ENCODE measurements at regions of chr4 and their contacts with region 1.

Region 1: GRCh38 chr4:109648266-109648996 is 54.8 kb downstream of the CASP6 start:
- DNase-seq: peak in 17 of 35 experiments; percentile 7 to 82 (median 30)
- ATAC-seq: peak; percentile 86 to 94 (median 88)
- H3K4me3 ChIP-seq: no peak overlapping the region
- H3K4me3 Mint-ChIP-seq: peak overlapping the region in 2 of 3 donors; percentile 68
- H3K27ac ChIP-seq: peak overlapping the region; percentile 82
- H3K27ac Mint-ChIP-seq: peak overlapping the region; percentile 91 to 94
- H3K4me1 ChIP-seq: peaks cover 32 to 49% of the 10 kb centered on the region in 2 experiments
- H3K4me1 Mint-ChIP-seq: peaks cover 35 to 47% (median 44%) of the 10 kb centered on the region in 3 donors
- H3K27me3 ChIP-seq: no peaks in the 10 kb centered on the region
- H3K27me3 Mint-ChIP-seq: no peaks in the 10 kb centered on the region

Region 2: DNA sequence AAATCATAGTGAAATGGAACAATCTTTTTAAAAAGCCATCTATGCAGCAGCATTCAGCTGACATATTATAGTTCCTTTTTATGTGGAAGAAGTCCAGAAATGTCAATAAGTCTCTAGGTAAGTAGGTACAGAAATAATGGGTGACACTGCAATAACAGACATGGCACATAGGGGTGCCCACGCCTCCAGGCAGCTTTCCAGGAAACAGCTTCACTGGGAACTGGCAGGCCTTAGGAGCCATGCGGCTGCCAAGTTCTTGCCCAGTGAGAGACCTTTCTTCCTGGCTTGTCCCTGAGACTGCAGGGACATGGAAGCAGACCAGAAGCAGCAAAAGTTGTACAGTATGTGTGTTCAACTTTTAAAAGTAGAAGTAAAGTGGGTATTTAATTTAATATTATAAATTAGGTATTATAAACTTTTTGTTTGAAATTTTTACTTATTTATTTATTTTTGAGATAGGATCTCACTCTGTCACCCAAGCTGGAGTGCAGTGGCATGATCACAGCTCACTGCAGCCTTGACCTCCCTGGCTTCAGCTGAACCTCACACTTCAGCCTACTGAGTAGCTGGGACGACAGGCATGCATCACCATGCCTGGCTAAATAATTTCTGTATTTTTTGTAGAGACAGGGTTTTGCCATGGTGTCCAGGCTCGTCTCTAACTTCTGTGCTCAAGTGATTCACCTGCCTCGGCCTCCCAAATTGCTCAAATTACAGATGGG is 873.5 kb before region 1 on chr4:
- CTCF ChIA-PET with region 1: no interaction called
- POLR2A ChIA-PET with region 1: no interaction called
- DNase-seq: no peak
- ATAC-seq: no peak
- H3K4me3 ChIP-seq: no peak overlapping the region
- H3K4me3 Mint-ChIP-seq: no peak overlapping the region
- H3K27ac ChIP-seq: no peak overlapping the region
- H3K27ac Mint-ChIP-seq: no peak overlapping the region
- H3K4me1 ChIP-seq: no peaks in the 10 kb centered on the region
- H3K4me1 Mint-ChIP-seq: no peaks in the 10 kb centered on the region
- H3K27me3 ChIP-seq: peaks cover 0 to 13% of the 10 kb centered on the region in 2 experiments
- H3K27me3 Mint-ChIP-seq: peaks cover 9 to 20% of the 10 kb centered on the region in 2 donors

Region 3: GRCh38 chr4:109511414-109511813 is 137.0 kb before region 1 on chr4:
- CTCF ChIA-PET with region 1: no interaction called
- POLR2A ChIA-PET with region 1: no interaction called
- DNase-seq: no peak
- ATAC-seq: no peak
- H3K4me3 ChIP-seq: no peak overlapping the region
- H3K4me3 Mint-ChIP-seq: no peak overlapping the region
- H3K27ac ChIP-seq: no peak overlapping the region
- H3K27ac Mint-ChIP-seq: no peak overlapping the region
- H3K4me1 ChIP-seq: no peaks in the 10 kb centered on the region
- H3K4me1 Mint-ChIP-seq: no peaks in the 10 kb centered on the region
- H3K27me3 ChIP-seq: no peaks in the 10 kb centered on the region
- H3K27me3 Mint-ChIP-seq: no peaks in the 10 kb centered on the region

Region 4: GRCh38 chr4:109574102-109574850 is 74.2 kb before region 1 on chr4:
- CTCF ChIA-PET with region 1: interaction called, 5 to 10 read pairs
- POLR2A ChIA-PET with region 1: interaction called in 1 of 2 experiments, 4 read pairs
- DNase-seq: peak in 8 of 35 experiments; percentile 4 to 52 (median 14)
- ATAC-seq: peak; percentile 66 to 79 (median 70)
- H3K4me3 ChIP-seq: no peak overlapping the region
- H3K4me3 Mint-ChIP-seq: peak overlapping the region; percentile 17 to 53 (median 46)
- H3K27ac ChIP-seq: no peak overlapping the region
- H3K27ac Mint-ChIP-seq: peak overlapping the region; percentile 6 to 83
- H3K4me1 ChIP-seq: peaks cover 15 to 28% of the 10 kb centered on the region in 2 experiments
- H3K4me1 Mint-ChIP-seq: peaks cover 76 to 81% (median 78%) of the 10 kb centered on the region in 3 donors
- H3K27me3 ChIP-seq: no peaks in the 10 kb centered on the region
- H3K27me3 Mint-ChIP-seq: no peaks in the 10 kb centered on the region

Region 5: DNA sequence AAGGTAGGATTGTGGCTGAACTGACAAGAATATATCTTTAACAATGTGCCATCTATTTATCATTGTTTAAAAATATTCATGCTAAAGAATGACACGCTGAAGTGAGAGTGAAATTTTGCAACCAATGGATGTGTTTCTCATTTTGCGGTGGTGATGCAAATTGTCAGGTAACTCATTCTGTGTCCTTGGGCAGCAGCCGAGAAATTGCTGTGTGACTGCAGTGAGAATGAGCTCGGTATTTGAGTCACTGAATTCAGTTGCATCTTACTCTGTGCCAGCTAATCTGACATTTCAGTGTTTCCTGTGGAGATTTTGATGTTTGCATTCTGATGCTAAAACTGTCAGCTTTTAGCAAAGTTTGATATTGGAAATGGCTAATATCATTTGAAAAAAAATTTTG is 60.3 kb before region 1 on chr4:
- CTCF ChIA-PET with region 1: no interaction called
- POLR2A ChIA-PET with region 1: interaction called, 5 to 11 read pairs
- DNase-seq: peak in 12 of 35 experiments; percentile 3 to 47 (median 14)
- ATAC-seq: peak; percentile 80 to 90 (median 82)
- H3K4me3 ChIP-seq: no peak overlapping the region
- H3K4me3 Mint-ChIP-seq: peak overlapping the region in 2 of 3 donors; percentile 14 to 52
- H3K27ac ChIP-seq: no peak overlapping the region
- H3K27ac Mint-ChIP-seq: peak overlapping the region; percentile 59 to 84
- H3K4me1 ChIP-seq: peaks cover 18 to 27% of the 10 kb centered on the region in 2 experiments
- H3K4me1 Mint-ChIP-seq: peaks cover 86 to 94% (median 94%) of the 10 kb centered on the region in 3 donors
- H3K27me3 ChIP-seq: no peaks in the 10 kb centered on the region
- H3K27me3 Mint-ChIP-seq: no peaks in the 10 kb centered on the region

Region 6: DNA sequence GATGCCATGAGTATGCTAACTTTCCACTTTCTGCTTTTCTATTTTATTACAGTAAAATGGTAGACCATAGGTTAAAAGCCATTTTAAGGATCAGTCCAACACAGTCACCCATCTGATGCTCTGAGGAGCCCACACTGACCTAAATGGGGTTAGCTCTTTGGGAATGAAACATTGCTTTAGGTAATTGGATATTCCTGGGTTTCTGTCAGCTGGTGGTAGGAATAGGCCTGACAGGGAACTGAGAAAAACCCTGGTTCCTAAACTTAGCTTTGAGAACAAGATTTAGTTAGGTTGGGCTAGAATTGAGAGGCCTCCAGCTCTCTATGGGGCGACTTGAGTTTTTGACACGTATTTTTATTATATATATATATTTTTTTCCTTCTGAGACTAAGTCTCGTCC is 48.0 kb before region 1 on chr4:
- CTCF ChIA-PET with region 1: no interaction called
- POLR2A ChIA-PET with region 1: interaction called in 1 of 2 experiments, 11 read pairs
- DNase-seq: no peak
- ATAC-seq: no peak
- H3K4me3 ChIP-seq: no peak overlapping the region
- H3K4me3 Mint-ChIP-seq: peak overlapping the region in 1 of 3 donors; percentile 28
- H3K27ac ChIP-seq: no peak overlapping the region
- H3K27ac Mint-ChIP-seq: peak overlapping the region; percentile 15 to 39
- H3K4me1 ChIP-seq: peaks cover 5 to 6% of the 10 kb centered on the region in 2 experiments
- H3K4me1 Mint-ChIP-seq: peaks cover 43 to 52% (median 51%) of the 10 kb centered on the region in 3 donors
- H3K27me3 ChIP-seq: no peaks in the 10 kb centered on the region
- H3K27me3 Mint-ChIP-seq: no peaks in the 10 kb centered on the region

Region 7: DNA sequence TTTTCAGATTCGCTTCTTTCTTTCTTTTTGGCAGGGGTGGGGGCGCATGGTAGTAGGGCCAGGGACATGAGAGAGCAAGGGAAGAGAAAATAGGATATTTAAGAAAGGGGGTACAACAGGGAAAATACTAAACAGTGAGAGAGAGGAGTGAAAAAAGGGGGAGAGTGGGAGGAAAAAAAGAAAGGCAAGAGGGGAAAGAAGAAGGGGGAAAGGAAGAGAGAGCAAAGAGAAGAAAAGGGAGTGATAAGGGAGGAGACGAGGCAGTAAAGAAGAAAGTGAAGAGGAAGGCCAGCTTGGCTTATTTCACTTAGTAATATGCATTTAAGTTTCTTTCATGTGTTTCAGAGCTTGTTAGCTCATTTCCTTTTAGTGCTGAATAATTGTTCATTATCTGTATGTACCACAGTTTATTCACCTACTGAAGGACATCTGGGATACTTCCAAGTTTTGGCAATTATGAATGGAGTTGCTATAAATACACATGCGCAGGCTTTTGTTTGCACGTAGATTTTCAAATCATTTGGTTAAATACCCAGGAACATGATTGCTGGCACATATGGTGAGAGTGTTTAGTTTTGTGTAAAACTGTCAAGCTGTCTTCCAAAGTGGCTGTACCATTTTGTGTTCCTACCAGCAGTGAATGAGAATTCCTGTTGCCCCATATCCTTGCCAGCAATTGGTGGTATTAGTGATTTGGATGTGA is 17.5 kb after region 1 on chr4:
- CTCF ChIA-PET with region 1: no interaction called
- POLR2A ChIA-PET with region 1: no interaction called
- DNase-seq: no peak
- ATAC-seq: no peak
- H3K4me3 ChIP-seq: no peak overlapping the region
- H3K4me3 Mint-ChIP-seq: peak overlapping the region in 1 of 3 donors; percentile 4
- H3K27ac ChIP-seq: no peak overlapping the region
- H3K27ac Mint-ChIP-seq: peak overlapping the region; percentile 37 to 70
- H3K4me1 ChIP-seq: peaks cover 2 to 14% of the 10 kb centered on the region in 2 experiments
- H3K4me1 Mint-ChIP-seq: peaks cover 60 to 71% (median 70%) of the 10 kb centered on the region in 3 donors
- H3K27me3 ChIP-seq: no peaks in the 10 kb centered on the region
- H3K27me3 Mint-ChIP-seq: no peaks in the 10 kb centered on the region

Region 8: GRCh38 chr4:110840221-110840654 is 1191.8 kb after region 1 on chr4:
- CTCF ChIA-PET with region 1: no interaction called
- POLR2A ChIA-PET with region 1: no interaction called
- DNase-seq: no peak
- ATAC-seq: no peak
- H3K4me3 ChIP-seq: no peak overlapping the region
- H3K4me3 Mint-ChIP-seq: no peak overlapping the region
- H3K27ac ChIP-seq: no peak overlapping the region
- H3K27ac Mint-ChIP-seq: no peak overlapping the region
- H3K4me1 ChIP-seq: no peaks in the 10 kb centered on the region
- H3K4me1 Mint-ChIP-seq: no peaks in the 10 kb centered on the region
- H3K27me3 ChIP-seq: no peaks in the 10 kb centered on the region
- H3K27me3 Mint-ChIP-seq: no peaks in the 10 kb centered on the region